ENCODE measurements at regions of chr1 and their contacts with region 1.

Region 1: GRCh38 chr1:183655562-183656075 is 2.5 kb upstream of the APOBEC4 start:
- DNase-seq: peak; percentile 74
- H3K27ac ChIP-seq: no peak overlapping the region
- CTCF ChIP-seq: peak; percentile 90

Region 2: DNA sequence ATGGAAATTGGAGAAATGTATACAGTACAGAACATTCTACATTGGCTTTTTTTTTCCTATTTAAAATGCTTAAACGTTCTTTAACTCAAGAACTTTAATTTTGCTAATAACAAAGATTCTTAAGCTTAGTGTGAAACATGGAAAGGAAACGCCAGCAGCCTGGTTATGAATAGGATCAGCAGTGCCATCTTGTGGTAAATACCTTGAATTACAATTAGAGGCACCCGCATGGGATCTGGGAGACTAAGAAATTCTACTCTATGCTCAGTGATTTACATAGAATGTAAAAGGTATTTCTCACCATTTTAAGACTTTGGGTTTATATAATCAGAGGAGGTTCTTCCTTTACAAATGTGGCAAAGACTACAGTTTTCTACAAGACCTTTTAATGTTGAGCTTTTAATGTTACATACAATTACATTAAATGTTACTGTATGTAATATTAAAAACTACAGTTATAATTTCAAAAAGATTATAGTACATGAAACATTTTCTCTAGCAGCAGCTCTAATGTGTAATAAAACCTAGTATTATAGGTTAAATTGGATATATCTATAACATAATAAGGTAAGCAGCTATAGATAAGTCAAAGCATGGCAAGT is 29.6 kb after region 1 on chr1:
- CTCF ChIA-PET with region 1: interaction called, 21 read pairs
- POLR2A ChIA-PET with region 1: no interaction called
- DNase-seq: peak; percentile 79
- H3K27ac ChIP-seq: no peak overlapping the region
- CTCF ChIP-seq: peak; percentile 80

Region 3: DNA sequence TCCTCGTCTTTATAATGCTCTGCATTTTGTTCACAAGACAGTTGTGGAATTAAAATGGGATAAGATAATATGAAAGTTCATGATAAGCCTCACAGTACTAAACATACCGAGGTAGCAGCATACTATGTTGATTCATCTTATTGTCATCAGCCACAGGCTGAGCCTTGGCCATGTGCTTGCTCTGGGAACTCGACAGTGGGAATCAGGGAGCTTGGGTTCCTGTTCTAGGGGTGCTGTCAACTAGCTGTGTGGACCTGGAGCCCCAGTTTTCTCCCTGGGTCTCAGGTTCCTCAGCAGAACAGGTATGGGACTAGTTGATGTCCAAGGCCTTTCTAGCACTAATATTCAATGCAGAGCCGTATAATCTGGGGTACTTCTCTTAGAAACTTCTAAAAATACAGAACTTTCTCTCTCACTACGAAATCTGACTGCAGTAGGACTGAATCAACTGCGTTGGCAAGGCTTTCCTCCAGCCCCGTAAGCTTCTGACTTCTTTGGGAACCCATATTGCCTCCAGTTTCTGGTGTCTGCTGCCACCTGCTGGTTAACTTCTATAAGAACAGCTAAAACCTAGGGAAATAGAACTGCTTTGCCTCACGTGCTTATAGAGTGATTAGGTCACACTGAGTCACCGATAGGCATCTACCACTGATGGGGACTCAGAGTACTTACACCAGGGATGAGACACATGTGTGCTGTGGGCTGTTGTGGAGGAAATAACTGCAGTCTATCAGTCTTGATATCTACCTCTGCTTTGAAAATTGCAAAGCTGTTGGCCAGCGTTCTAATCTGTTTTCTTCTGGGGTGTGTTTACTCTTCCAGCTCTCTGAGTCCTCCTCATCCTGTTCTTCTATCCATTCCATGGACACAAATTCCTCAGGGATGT is 260.2 kb after region 1 on chr1:
- CTCF ChIA-PET with region 1: interaction called, 48 read pairs
- POLR2A ChIA-PET with region 1: no interaction called
- DNase-seq: peak; percentile 94
- H3K27ac ChIP-seq: no peak overlapping the region
- CTCF ChIP-seq: peak; percentile 81